ENCODE measurements at regions of chr12 and their contacts with region 1.

Region 1: DNA sequence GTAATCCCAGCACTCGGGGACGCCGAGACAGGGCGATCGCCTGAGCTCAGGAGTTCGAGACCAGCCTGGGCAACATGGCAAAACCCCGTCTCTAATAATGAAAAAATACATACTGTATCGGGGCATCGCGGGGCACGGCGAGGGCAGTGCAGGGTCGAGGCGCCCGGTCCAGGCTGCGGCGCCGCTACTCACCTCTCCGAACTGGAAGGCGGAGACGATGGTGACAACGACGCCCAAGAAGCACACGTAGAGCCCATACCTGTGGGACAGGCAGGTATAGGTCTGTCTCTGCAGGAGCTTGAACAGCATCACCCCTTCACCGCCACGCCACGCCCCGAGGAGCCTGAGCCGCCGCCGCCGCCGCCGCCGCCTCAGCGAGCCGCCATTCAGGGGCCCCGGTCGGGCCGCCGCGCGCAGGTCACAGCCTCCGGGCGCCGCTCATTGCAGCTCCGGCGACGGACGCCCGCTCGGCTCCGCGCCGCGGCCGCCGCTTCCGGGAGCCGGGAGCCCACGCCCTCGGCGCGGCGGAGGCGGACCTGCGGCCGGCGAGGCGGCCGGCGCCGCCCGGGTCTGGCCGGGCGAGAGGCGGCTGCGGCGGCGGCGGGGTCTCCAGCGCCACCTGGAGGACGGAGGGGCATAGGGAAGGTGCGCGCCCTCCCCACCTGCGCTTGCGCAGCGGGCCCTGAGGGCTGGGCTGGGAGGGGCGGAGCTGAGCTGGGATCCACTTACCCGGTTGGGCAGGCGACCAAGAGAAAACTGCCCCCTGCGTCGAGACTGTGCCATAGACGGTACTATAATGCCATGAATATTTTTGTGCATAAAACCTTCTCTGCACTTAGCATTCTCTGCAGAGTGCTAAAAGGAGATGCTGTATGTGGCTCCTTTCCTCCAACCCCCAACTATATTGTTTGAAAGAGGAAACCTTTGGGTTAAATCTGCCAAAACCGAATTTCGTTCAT is at the start of gene GNPTAB:
- DNase-seq: peak; percentile 51 to 96
- H3K4me3 ChIP-seq: peak within 1 kb of the TSS; percentile 86 to 95
- H3K27ac ChIP-seq: peak within 1 kb of the TSS; percentile 72 to 75
- H3K4me1 ChIP-seq: peaks cover 0 to 10% of the 10 kb centered on the region in 2 donors
- H3K27me3 ChIP-seq: no peaks in the 10 kb centered on the region
- CTCF ChIP-seq: peak; percentile 72 to 85 (median 73)
- total RNA-seq, gene GNPTAB: 9.5 TPM

Region 2: GRCh38 chr12:101407436-101408345 is 423.0 kb before region 1 on chr12 and contains the start of gene ARL1:
- intact Hi-C with region 1: loop called (anchors 5 kb)
- DNase-seq: peak; percentile 29 to 89
- H3K4me3 ChIP-seq: peak within 1 kb of the TSS; percentile 89 to 92
- H3K27ac ChIP-seq: peak within 1 kb of the TSS; percentile 89 to 94
- H3K4me1 ChIP-seq: peaks cover 0 to 3% of the 10 kb centered on the region in 2 donors
- H3K27me3 ChIP-seq: no peaks in the 10 kb centered on the region
- CTCF ChIP-seq: no peak
- total RNA-seq, gene ARL1: 16.0 TPM

Region 3: DNA sequence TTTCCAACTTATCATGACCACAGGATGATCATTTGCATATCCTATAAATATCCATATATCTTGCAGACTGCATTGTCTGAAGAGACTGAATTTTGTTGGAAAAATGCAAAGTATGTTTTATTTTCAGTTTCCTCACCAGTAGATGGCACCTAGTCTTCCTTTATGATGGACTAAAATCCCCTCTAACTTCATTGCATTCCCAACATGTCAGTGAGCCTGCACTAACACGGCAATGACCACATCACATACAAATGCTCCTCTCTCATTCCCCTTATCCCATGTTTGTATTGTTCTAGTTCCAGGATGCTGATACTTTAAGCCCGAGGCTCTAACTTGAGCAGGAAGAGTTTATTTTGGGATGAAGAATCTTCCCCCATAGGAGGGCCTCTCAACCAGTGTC is 260.6 kb before region 1 on chr12:
- intact Hi-C with region 1: loop called (anchors 10 kb)
- DNase-seq: no peak
- H3K4me3 ChIP-seq: no peak overlapping the region
- H3K27ac ChIP-seq: no peak overlapping the region
- H3K4me1 ChIP-seq: no peaks in the 10 kb centered on the region
- H3K27me3 ChIP-seq: no peaks in the 10 kb centered on the region
- CTCF ChIP-seq: peak in 2 of 3 experiments; percentile 12 to 19

Region 4: GRCh38 chr12:101773650-101774162 is 56.9 kb before region 1 on chr12:
- intact Hi-C with region 1: loop called (anchors 2 kb)
- DNase-seq: peak in 1 of 2 donors; percentile 70
- H3K4me3 ChIP-seq: no peak overlapping the region
- H3K27ac ChIP-seq: no peak overlapping the region
- H3K4me1 ChIP-seq: no peaks in the 10 kb centered on the region
- H3K27me3 ChIP-seq: no peaks in the 10 kb centered on the region
- CTCF ChIP-seq: peak; percentile 83 to 91 (median 87)